ENCODE measurements at regions of chr11 and their contacts with region 1.

Region 1: DNA sequence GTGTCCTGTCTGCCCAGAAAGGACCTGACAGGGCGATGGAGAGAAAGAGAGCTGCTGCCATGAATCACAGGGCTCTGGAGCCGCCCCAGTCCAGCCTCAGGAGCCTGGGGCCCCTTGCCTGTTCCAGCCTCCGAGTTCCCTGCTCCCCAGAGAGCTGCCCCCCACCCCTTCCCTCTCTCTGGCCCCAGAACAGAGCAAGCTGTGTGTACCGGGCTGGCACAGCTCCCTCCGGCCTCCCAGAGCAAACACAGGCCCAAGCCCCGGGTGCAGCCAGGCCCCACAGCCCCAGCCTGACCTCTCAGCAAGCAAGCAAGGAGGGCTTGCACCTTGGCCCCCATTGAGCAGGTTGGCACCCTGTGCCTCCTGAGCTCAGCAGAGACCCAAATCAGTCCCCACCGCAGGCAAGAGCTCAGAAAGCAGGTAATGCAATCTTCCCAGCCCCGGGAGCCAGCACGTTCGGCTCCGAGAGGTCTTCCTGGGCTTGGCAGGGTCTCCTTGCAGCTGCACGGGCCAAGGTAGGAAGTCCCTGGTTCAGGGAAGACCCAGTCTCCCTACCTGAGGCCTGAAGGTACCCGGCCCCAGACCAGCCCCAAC is 1.4 kb downstream of the PACSIN3 start:
- DNase-seq: no peak

Region 2: GRCh38 chr11:47216121-47216798 is 31.5 kb after region 1 on chr11:
- intact Hi-C with region 1: no loop called
- DNase-seq: no peak

Region 3: DNA sequence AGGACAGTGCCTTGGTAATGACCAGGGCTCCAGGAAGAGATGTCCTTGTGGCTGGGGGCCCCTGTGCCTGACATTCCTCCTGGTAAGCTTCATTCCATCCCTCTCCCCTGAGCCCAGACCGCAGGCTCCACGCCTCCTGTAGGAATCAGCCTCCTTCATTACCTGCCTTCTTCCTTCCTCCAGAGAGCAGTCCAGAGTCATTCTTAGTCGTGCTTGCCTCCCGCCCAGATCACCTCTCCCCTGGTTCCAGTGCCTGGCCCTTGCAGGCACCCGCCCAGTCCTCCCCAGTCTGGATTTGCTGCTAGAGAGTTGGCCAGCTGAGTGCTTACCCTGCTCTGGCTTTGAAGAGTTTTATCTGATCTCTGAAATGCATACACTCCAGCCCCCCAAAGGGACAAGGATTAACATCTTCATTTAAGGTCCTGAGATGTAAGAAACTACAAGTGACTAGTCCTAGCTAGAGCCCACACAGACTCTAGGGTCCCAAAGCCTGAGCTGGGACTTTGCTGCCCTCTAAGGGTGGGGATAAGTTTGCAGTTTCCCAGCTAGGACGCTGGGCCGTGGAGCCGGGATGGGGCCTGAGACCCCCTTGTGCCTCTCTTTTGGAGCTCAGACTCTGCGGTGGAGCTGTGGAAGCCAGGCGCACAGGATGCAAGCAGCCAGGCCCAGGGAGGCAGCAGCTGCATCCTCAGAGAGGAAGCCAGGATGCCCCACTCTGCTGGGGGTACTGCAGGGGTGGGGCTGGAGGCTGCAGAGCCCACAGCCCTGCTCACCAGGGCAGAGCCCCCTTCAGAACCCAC is 74.6 kb after region 1 on chr11:
- intact Hi-C with region 1: loop called in 1 of 2 experiments (anchors 5 kb)
- DNase-seq: no peak